Activated CD4-positive, alpha-beta memory T cell treated with anti-CD3 and anti-CD28 coated beads, Interleukin-2, amount 10 ng/mL, durations not matched to agents 7 days and 5 days (primary cell): ENCODE measurements at regions of chr6 and their contacts with region 1.

Region 1: GRCh38 chr6:26216356-26216885 is 129.2 kb downstream of the HFE start:
- DNase-seq: peak; percentile 90
- H3K4me3 Mint-ChIP-seq: no peak overlapping the region
- H3K27ac Mint-ChIP-seq: no peak overlapping the region
- H3K4me1 Mint-ChIP-seq: peaks cover 28% of the 10 kb centered on the region
- H3K27me3 Mint-ChIP-seq: no peaks in the 10 kb centered on the region

Region 2: GRCh38 chr6:25981568-25982263 is 234.7 kb before region 1 on chr6:
- CTCF ChIA-PET with region 1: no interaction called
- POLR2A ChIA-PET with region 1: no interaction called
- DNase-seq: no peak
- H3K4me3 Mint-ChIP-seq: no peak overlapping the region
- H3K27ac Mint-ChIP-seq: no peak overlapping the region
- H3K4me1 Mint-ChIP-seq: peaks cover 22% of the 10 kb centered on the region
- H3K27me3 Mint-ChIP-seq: no peaks in the 10 kb centered on the region

Region 3: DNA sequence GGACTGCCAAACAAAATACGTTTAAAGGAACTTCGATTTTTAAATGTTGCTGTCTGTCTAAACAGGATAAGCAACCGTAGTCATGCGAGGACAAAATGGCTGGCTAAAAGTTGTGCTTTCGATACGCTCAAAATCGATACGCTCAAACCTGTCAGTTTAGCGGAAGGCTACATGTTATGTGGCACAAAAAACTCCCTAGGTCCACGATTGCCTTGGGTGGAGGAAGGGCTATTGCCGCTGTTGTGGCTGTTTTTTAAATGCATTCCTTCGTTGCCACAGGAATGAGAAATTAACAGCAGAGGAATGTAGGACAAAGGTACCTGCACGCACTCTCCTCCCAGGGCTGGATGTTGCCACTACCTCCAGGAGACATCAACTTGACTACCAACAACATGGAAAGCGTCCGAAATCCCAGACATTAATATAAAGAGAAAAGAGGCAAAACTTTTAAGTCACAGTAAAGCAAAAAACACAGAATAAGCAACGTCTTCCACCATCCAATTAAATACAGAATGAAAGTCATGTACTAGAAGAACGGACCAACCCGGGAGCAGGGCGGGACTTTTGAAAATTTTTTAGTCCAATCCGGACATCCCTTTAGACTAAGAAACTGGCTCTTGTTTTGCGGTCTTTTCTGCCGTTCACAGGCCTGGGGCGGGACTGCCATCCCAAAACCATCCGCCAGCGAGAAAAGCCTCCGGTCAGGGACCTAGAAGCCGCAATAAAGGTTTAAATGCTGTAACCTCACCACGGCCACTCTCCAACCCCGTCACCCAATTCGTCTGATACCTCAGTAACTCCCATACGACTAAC is 161.4 kb before region 1 on chr6:
- CTCF ChIA-PET with region 1: no interaction called
- POLR2A ChIA-PET with region 1: interaction called, 22 read pairs
- DNase-seq: peak; percentile 92
- H3K4me3 Mint-ChIP-seq: peak overlapping the region; percentile 83
- H3K27ac Mint-ChIP-seq: peak overlapping the region; percentile 99
- H3K4me1 Mint-ChIP-seq: peaks cover 37% of the 10 kb centered on the region
- H3K27me3 Mint-ChIP-seq: no peaks in the 10 kb centered on the region

Region 4: GRCh38 chr6:26175428-26176181 is 40.8 kb before region 1 on chr6:
- CTCF ChIA-PET with region 1: interaction called, 12 read pairs
- POLR2A ChIA-PET with region 1: interaction called, 89 read pairs
- DNase-seq: peak; percentile 68
- H3K4me3 Mint-ChIP-seq: peak overlapping the region; percentile 5
- H3K27ac Mint-ChIP-seq: peak overlapping the region; percentile 50
- H3K4me1 Mint-ChIP-seq: peaks cover 44% of the 10 kb centered on the region
- H3K27me3 Mint-ChIP-seq: no peaks in the 10 kb centered on the region

Region 5: DNA sequence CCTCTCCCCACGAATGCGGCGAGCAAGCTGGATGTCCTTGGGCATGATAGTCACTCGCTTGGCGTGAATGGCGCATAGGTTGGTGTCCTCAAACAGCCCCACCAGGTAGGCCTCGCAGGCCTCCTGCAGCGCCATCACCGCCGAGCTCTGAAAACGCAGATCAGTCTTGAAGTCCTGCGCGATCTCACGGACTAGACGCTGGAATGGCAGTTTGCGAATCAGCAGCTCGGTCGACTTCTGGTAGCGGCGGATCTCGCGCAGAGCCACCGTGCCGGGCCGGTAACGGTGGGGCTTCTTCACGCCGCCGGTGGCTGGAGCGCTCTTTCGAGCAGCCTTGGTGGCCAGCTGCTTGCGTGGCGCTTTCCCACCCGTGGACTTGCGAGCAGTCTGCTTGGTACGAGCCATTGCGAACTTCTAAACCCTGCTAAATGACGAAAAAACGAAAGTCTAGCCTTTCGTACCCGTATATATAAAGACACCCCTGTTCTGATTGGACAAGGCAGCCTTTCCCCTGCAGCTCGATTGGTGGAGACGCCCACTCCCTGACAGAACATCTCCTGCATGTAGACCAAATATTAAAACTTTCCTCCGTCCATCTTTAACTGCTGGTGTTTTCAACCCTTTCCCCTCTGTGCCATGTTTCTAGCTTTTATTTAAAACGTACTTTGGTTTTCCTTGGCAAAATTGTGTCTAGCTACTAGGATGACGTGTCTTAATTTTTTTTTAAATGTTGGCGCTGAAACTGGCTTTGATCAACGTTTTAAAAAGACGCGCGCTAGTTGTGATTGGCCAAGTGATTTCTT is 19.4 kb before region 1 on chr6:
- CTCF ChIA-PET with region 1: interaction called, 23 read pairs
- POLR2A ChIA-PET with region 1: interaction called, 812 read pairs
- DNase-seq: peak; percentile 85
- H3K4me3 Mint-ChIP-seq: peak overlapping the region; percentile 93
- H3K27ac Mint-ChIP-seq: peak overlapping the region; percentile 96
- H3K4me1 Mint-ChIP-seq: peaks cover 49% of the 10 kb centered on the region
- H3K27me3 Mint-ChIP-seq: no peaks in the 10 kb centered on the region

Region 6: DNA sequence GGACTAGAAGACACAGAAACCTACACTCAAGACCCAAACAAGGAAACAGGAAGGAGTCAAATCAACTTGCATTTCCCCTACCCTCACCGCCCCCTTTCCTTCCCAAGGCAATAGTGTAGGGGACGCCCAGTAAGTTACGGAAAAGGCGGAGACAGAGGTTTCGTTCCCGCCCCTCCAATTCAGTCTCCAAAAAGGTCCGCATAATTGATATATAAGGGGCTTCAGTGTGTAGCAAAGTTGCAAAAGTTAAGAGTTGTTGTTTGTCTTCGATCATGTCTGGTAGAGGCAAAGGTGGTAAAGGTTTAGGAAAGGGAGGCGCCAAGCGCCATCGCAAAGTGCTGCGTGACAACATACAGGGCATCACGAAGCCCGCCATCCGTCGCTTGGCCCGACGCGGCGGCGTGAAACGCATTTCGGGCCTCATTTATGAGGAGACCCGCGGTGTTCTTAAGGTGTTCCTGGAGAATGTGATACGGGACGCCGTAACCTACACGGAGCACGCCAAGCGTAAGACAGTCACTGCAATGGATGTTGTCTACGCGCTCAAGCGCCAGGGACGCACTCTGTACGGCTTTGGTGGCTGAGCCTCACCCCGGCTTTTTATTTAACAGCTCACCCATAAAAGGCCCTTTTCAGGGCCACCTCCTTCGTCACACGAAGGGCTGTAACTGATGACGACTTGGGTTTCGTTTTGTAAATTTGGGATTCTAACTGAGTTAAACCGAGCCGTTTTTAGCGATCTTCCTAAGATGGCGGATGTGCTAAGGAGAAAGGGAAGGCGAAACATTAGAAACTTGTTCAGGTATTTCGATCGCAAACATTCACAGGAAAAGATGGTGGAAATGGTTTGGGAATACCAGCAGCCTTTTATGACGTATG is 24.0 kb after region 1 on chr6:
- CTCF ChIA-PET with region 1: interaction called, 34 read pairs
- POLR2A ChIA-PET with region 1: interaction called, 833 read pairs
- DNase-seq: peak; percentile 87
- H3K4me3 Mint-ChIP-seq: peak overlapping the region; percentile 71
- H3K27ac Mint-ChIP-seq: peak overlapping the region; percentile 94
- H3K4me1 Mint-ChIP-seq: peaks cover 42% of the 10 kb centered on the region
- H3K27me3 Mint-ChIP-seq: no peaks in the 10 kb centered on the region

Region 7: DNA sequence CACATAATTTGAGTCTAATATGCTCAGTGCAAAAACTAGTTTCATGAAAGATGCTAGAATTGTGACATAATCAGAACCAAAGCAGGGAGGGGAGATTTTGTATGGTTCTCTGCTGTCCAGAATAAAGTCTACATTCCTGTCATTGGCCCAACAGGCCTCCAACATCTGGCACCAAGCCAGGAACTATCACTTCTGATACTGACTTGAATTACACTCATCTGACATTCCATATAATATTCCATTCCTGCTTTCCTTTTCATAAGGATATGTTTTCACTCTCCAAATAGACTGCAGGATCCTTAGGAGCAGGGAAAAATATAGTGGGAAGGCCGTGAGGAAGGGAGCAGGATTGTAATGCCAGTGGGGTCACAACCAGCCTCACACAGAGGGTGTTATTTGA is 64.0 kb after region 1 on chr6:
- CTCF ChIA-PET with region 1: interaction called, 3 read pairs
- POLR2A ChIA-PET with region 1: interaction called, 326 read pairs
- DNase-seq: no peak
- H3K4me3 Mint-ChIP-seq: no peak overlapping the region
- H3K27ac Mint-ChIP-seq: no peak overlapping the region
- H3K4me1 Mint-ChIP-seq: peaks cover 41% of the 10 kb centered on the region
- H3K27me3 Mint-ChIP-seq: no peaks in the 10 kb centered on the region

Region 8: GRCh38 chr6:27871924-27872638 is 1655.7 kb after region 1 on chr6:
- CTCF ChIA-PET with region 1: no interaction called
- POLR2A ChIA-PET with region 1: interaction called, 25 read pairs
- DNase-seq: peak; percentile 87
- H3K4me3 Mint-ChIP-seq: peak overlapping the region; percentile 81
- H3K27ac Mint-ChIP-seq: peak overlapping the region; percentile 99
- H3K4me1 Mint-ChIP-seq: peaks cover 60% of the 10 kb centered on the region
- H3K27me3 Mint-ChIP-seq: no peaks in the 10 kb centered on the region